Motor neuron (in vitro differentiated cells): ENCODE measurements at regions of chr4 and their contacts with region 1.

Region 1: DNA sequence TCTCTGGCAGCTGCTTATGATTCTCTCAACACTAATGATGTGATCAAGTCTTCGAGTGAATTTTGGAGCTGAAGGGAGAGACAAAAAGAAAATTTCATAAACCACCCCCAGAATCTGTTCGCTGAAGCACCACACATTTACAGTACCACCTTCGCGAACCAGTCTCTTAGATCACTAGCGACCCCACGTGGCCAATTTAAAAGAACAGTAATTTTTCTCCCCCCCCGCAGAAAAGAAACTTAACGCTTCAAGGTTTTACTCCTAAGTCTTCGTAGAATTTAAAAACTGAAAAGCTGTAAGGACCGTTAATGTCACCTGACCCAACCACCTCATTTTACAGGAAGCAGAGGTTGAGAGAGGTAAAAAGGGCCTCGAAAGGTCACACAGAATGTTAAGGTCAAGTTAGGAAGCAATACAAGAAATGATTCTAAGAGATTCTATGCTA is 187.5 kb downstream of the QDPR start:
- ATAC-seq: peak in 7 of 8 experiments; percentile 32 to 75 (median 43)
- H3K4me3 ChIP-seq: no peak overlapping the region
- H3K27ac ChIP-seq: no peak overlapping the region
- H3K4me1 ChIP-seq: peaks cover 8 to 10% of the 10 kb centered on the region in 2 donors

Region 2: DNA sequence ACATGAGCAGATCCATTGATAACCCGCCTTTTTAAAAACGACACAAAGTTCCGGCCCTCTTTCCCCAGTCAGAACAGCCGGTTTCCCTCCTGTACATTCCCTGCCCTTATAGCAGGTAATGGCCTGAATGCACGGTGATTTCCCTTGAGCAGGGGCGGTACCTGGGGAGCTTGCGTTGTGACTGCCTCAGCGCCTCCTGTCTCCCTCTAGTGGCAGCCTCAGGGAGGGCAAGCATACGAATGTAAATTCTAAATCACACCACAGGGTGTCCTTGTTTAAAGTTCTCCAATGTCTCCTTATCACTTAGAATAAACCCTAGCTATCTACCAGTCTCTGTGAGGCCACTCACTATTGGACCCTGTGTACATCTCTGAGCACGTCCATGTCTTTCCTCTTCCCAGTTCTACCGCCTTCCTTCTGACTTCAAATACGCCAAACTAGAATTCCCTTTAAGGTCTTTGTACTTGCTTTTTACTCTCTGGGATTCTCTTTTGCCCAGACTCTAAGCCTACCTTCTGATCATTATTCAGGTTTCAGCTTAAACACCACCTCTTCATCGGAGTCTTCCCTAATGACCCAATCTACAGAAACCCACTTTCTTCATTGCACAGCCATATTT is 407.6 kb before region 1 on chr4:
- in situ Hi-C with region 1: loop called in 3 of 9 experiments (anchors 25 kb)
- ATAC-seq: peak in 1 of 8 experiments; percentile 31
- H3K4me3 ChIP-seq: no peak overlapping the region
- H3K27ac ChIP-seq: no peak overlapping the region
- H3K4me1 ChIP-seq: peaks cover 0 to 5% of the 10 kb centered on the region in 2 donors

Region 3: DNA sequence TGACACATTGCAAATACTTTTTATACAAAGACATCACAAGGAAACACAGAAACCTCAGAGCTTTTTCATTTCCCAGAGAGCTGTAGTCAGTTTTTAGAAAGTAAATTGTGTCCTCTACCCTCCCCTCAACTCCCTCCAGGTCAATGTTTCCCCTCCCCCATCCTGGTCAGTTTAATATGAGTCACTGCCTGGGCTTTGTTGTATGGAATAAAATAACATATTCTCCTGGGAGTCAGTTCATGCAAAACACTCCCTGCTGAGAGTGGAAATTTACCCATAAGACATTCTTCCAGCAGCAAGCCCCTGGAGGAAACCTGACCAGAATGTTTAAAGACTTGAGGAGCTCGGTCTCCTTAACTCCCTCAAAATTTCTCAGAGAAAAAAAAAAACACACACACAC is 155.8 kb before region 1 on chr4:
- in situ Hi-C with region 1: loop called in 1 of 9 experiments (anchors 25 kb)
- ATAC-seq: peak; percentile 26 to 100 (median 97)
- H3K4me3 ChIP-seq: no peak overlapping the region
- H3K27ac ChIP-seq: peak overlapping the region; percentile 10 to 12
- H3K4me1 ChIP-seq: peaks cover 22 to 33% of the 10 kb centered on the region in 2 donors